H1 (cell line): ENCODE measurements at regions of chr1 and their contacts with region 1.

Region 1: GRCh38 chr1:181021811-181022434 is 747 bp downstream of the STX6 start:
- DNase-seq: peak; percentile 25 to 63
- H3K4me3 ChIP-seq: peak overlapping the region; percentile 82 to 99 (median 94)
- H3K27ac ChIP-seq: peak overlapping the region; percentile 81
- H3K4me1 ChIP-seq: peaks cover 0 to 4% (median 3%) of the 10 kb centered on the region in 4 experiments; a peak in 3 of 7 replicates
- H3K27me3 ChIP-seq: no peaks in the 10 kb centered on the region; a peak in 1 of 7 replicates
- CTCF ChIP-seq: no peak
- EP300 ChIP-seq: no peak
- POLR2A ChIP-seq: peak in 1 of 2 experiments; percentile 53; a peak in 1 of 3 replicates
- RAD21 ChIP-seq: no peak

Region 2: DNA sequence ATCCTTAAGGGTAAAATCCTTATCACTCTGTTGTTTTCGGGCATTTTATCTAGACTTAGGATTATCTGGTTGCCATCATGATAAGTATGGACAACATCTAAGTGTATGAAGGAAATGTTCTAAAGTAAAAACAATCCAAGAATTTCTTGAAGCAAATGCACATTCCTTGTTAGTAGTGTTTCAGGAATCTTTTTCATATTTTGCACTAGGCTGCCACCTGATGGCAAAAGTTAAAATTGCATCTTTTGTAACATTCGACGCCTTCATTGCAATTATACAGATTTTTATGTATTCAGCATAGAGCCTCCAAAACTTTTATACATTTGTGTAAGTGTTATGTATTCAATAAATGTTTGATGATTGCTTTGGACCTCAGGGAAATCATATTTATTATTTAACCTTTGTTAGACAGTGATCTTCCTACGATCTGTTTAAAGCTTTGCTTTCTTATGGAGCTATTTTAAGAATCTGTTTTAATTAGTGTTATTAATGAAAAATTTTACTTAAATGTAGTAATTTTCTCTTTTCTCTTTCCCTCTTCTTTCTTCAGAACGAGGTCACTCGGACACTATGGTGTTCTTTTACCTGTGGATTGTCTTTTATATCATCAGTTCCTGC is 158.7 kb before region 1 on chr1:
- CTCF ChIA-PET with region 1: no interaction called
- POLR2A ChIA-PET with region 1: no interaction called
- DNase-seq: no peak
- H3K4me3 ChIP-seq: no peak overlapping the region
- H3K27ac ChIP-seq: no peak overlapping the region
- H3K4me1 ChIP-seq: no peaks in the 10 kb centered on the region
- H3K27me3 ChIP-seq: no peaks in the 10 kb centered on the region
- CTCF ChIP-seq: peak in 2 of 3 experiments; percentile 43 to 53; a peak in 2 of 4 replicates
- EP300 ChIP-seq: no peak
- POLR2A ChIP-seq: no peak
- RAD21 ChIP-seq: peak; percentile 80 to 82

Region 3: DNA sequence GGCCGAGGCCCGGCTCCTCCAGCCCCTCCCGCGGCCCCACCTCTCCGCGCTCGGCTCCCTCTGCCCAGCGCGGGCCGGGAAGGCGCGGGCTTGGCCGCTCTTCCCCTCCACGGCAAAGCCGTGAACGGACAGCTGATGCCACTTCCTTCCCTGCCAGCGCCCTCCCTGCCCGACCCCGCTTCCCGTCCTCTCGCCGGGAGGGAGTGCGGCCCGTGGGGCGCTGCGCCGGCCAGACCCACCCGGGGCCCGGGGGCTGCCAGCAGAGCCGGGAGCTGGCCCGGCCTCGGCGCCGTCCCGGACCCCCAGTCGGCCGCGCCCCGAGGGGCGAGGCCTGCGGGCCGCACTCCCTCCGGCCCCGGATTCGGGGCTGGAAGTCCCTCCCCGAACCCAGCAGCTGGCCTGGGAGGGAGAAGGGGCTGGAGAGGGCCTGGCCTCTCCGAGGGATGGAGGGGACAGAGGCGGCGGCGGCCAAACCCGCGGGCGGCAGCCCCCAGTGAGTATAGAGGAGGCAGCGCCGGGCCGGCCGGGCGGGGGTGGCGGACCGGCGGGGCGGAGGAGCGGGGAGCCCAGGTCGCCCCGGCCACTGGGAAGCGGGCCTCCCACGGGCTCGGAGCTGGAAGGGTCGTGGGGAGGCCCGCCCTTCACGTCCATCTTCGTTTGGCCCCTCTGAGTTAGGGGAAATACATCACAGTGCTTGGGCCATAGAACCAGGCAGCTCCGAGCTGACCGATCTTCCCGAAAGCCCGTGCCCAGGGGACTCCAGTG is 108.9 kb before region 1 on chr1 and contains the start of gene KIAA1614:
- CTCF ChIA-PET with region 1: no interaction called
- POLR2A ChIA-PET with region 1: interaction called, 13 read pairs
- DNase-seq: peak in 1 of 2 experiments; percentile 79
- H3K4me3 ChIP-seq: peak within 1 kb of the TSS; percentile 60 to 80 (median 64)
- H3K27ac ChIP-seq: peak within 1 kb of the TSS; percentile 54
- H3K4me1 ChIP-seq: peaks cover 0 to 8% (median 3%) of the 10 kb centered on the region in 4 experiments; a peak in 6 of 7 replicates
- H3K27me3 ChIP-seq: peaks cover 0 to 3% (median under 1%) of the 10 kb centered on the region in 4 experiments; a peak in 5 of 7 replicates
- CTCF ChIP-seq: no peak
- EP300 ChIP-seq: no peak
- POLR2A ChIP-seq: no peak; a peak in 1 of 3 replicates
- RAD21 ChIP-seq: no peak; a peak in 1 of 4 replicates
- total RNA-seq, gene KIAA1614: 2.6 and 3.1 TPM in 2 replicates

Region 4: DNA sequence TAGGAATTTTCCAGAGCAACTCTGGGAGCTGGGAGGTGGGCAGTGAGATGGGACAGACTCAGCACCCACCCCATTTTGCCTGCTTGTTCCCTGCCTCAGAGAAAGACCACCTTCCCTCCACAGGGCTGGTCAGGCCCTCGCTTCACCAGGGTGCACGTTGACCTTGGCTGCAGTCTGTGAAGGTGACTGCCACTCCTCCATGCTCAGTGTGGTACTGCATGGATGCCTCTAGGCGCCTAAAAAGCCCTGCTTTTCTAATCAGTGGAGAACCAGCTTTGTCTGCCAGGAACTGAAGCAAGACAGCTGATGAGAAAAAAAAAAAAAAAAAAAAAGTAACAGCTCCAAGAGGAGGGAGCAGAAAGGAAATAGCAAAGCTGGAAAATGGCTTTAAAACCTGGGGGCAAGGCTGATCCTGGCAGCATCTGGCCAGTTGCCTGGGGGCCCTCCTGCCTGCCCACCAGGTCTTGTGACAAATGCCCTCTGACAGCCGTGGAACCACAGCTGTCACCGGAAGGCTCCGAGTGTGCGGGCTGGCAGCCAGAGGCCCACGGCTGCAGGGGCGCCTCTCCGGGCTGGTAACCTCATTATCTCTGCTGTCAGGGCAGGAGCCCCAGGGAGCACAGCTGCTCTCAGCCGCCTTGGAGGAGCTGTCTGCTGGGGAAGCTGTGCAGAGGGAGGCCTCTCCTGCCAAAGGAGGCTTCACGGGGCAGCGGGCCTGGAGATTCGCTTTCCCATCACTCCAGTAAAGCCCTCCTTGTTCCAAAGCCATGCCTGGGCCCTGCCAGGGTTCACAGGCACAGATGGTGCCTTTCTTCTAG is 95.5 kb before region 1 on chr1:
- CTCF ChIA-PET with region 1: no interaction called
- POLR2A ChIA-PET with region 1: interaction called, 10 read pairs
- DNase-seq: no peak
- H3K4me3 ChIP-seq: no peak overlapping the region
- H3K27ac ChIP-seq: no peak overlapping the region
- H3K4me1 ChIP-seq: peaks cover 32 to 59% (median 43%) of the 10 kb centered on the region in 4 experiments
- H3K27me3 ChIP-seq: no peaks in the 10 kb centered on the region; a peak in 1 of 7 replicates
- CTCF ChIP-seq: no peak
- EP300 ChIP-seq: no peak
- POLR2A ChIP-seq: no peak
- RAD21 ChIP-seq: no peak

Region 5: GRCh38 chr1:180962178-180962577 is 59.7 kb before region 1 on chr1:
- CTCF ChIA-PET with region 1: no interaction called
- POLR2A ChIA-PET with region 1: no interaction called
- DNase-seq: no peak
- H3K4me3 ChIP-seq: no peak overlapping the region
- H3K27ac ChIP-seq: no peak overlapping the region
- H3K4me1 ChIP-seq: no peaks in the 10 kb centered on the region
- H3K27me3 ChIP-seq: no peaks in the 10 kb centered on the region
- CTCF ChIP-seq: no peak
- EP300 ChIP-seq: no peak
- POLR2A ChIP-seq: no peak
- RAD21 ChIP-seq: no peak

Region 6: GRCh38 chr1:181044449-181044966 is 22.6 kb after region 1 on chr1:
- CTCF ChIA-PET with region 1: interaction called, 8 read pairs
- POLR2A ChIA-PET with region 1: interaction called, 16 read pairs
- DNase-seq: no peak
- H3K4me3 ChIP-seq: no peak overlapping the region
- H3K27ac ChIP-seq: no peak overlapping the region
- H3K4me1 ChIP-seq: peaks cover 0 to 4% (median 2%) of the 10 kb centered on the region in 4 experiments; a peak in 4 of 7 replicates
- H3K27me3 ChIP-seq: no peaks in the 10 kb centered on the region
- CTCF ChIP-seq: no peak
- EP300 ChIP-seq: no peak
- POLR2A ChIP-seq: no peak
- RAD21 ChIP-seq: no peak

Region 7: GRCh38 chr1:181105134-181106021 is 83.5 kb after region 1 on chr1:
- CTCF ChIA-PET with region 1: no interaction called
- POLR2A ChIA-PET with region 1: interaction called, 14 read pairs
- DNase-seq: peak in 1 of 2 experiments; percentile 86
- H3K4me3 ChIP-seq: peak overlapping the region; percentile 53 to 75 (median 64)
- H3K27ac ChIP-seq: peak overlapping the region; percentile 62; the same call in 1 of the 2 replicates
- H3K4me1 ChIP-seq: peaks cover 8 to 40% (median 21%) of the 10 kb centered on the region in 4 experiments
- H3K27me3 ChIP-seq: peaks cover 9 to 42% (median 41%) of the 10 kb centered on the region in 4 experiments
- CTCF ChIP-seq: no peak
- EP300 ChIP-seq: no peak
- POLR2A ChIP-seq: 0 out of 3 replicates have a peak, but pooled peaks of 1 of the 2 experiments have one; percentile 27
- RAD21 ChIP-seq: no peak

Region 8: DNA sequence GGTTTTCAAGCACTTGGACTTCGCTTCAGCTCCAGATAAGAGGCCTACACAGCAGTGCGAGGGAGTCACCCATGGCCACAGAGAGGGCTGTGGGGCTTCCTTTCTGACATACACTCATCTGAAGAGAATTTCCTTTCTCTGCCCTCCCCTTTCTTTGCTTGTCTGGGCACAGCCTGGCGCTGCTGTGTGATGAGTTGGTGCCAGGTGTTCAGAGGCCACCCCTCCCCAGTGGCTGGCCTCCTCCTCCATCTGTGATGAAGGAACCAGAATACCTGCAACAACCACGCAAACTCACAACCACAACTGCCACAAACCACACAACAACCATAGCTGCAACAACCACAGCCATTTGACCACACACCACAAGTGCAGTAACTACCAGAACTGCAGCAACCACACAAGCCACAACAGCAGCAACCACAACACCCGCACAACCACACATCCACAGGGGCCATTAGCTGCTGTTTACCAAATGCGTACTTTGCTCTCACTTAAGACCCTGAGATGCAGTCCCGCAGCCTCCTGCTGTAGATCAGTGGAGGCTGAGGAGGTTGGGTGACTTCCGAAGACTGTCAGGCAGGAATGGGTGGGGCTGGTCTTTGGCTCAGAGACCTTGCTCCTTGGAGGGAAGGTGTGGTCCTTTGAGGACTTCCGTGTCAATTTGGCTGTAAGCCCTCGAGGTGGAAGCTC is 137.7 kb after region 1 on chr1:
- CTCF ChIA-PET with region 1: no interaction called
- POLR2A ChIA-PET with region 1: no interaction called
- DNase-seq: no peak
- H3K4me3 ChIP-seq: no peak overlapping the region
- H3K27ac ChIP-seq: no peak overlapping the region
- H3K4me1 ChIP-seq: no peaks in the 10 kb centered on the region
- H3K27me3 ChIP-seq: no peaks in the 10 kb centered on the region
- CTCF ChIP-seq: no peak
- EP300 ChIP-seq: no peak
- POLR2A ChIP-seq: no peak
- RAD21 ChIP-seq: no peak